Left colon (tissue), 2 donors: ENCODE measurements at regions of chr2 and their contacts with region 1.

Region 1: GRCh38 chr2:176554101-176555048 is 285.1 kb downstream of the MTX2 start:
- DNase-seq: peak in 1 of 2 donors; percentile 22
- ATAC-seq: peak; percentile 71

Region 2: GRCh38 chr2:176364273-176364977 is 189.9 kb before region 1 on chr2:
- intact Hi-C with region 1: no loop called
- DNase-seq: no peak
- ATAC-seq: no peak

Region 3: DNA sequence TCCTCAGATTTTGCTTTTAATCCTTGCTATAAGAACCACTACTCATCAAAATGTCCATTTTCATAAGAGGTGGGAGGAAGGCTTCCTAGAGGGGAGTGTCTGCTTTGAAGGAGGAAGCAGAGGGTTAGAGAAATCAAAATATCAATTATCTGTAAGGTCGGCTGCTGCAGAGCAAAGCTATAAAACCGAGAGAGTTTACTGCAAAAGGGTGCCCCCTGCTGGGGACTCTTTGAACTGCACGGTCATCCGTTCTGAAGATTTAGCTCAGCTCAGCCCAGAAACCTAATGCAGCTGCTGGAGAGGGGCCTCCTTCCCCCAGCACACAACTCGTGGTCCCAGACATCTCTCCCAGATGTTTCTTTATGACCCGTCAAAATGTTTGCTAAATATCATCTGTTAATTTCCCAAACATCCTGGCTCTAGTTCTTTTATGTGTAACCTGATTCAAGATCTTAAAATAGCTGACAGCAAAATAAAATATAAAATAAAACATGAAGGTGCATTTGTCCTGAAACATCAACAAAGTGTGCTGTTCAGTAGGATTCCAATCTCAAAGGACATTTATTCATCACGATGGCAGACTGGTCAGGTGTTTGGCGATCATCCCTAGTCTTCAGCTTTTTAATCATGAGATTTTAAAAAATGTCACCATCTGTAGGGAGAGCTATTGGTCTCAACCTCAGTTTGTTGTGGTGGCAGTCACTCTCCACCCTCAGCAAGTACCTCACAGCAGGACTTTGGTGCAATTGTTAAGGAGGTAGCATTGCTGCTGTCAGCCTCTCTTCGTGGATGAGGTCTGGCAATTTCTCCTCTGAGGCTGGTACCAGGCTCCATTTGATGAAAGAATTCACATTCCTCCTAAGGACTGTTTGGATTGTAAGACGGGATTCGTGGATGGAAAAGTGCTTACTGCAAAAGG is 99.2 kb before region 1 on chr2:
- intact Hi-C with region 1: loop called in 1 of 2 experiments (anchors 10 kb)
- DNase-seq: peak; percentile 67 to 94
- ATAC-seq: peak; percentile 79

Region 4: GRCh38 chr2:176638167-176639015 is 84.0 kb after region 1 on chr2:
- intact Hi-C with region 1: loop called in 1 of 2 experiments (anchors 5 kb)
- DNase-seq: peak; percentile 43 to 82
- ATAC-seq: peak; percentile 96

Region 5: GRCh38 chr2:177275041-177276020 is 721.0 kb after region 1 on chr2:
- intact Hi-C with region 1: no loop called
- DNase-seq: no peak
- ATAC-seq: no peak